HEK293 (cell line): ENCODE measurements at regions of chr1 and their contacts with region 1.

Region 1: GRCh38 chr1:151459331-151460046 is at the start of gene POGZ:
- H3K4me3 ChIP-seq: peak within 1 kb of the TSS; percentile 84
- H3K27ac ChIP-seq: peak within 1 kb of the TSS; percentile 77
- H3K4me1 ChIP-seq: 0 out of 2 replicates have a peak, but pooled peaks cover 2% of the 10 kb centered on the region
- CTCF ChIP-seq: no peak

Region 2: DNA sequence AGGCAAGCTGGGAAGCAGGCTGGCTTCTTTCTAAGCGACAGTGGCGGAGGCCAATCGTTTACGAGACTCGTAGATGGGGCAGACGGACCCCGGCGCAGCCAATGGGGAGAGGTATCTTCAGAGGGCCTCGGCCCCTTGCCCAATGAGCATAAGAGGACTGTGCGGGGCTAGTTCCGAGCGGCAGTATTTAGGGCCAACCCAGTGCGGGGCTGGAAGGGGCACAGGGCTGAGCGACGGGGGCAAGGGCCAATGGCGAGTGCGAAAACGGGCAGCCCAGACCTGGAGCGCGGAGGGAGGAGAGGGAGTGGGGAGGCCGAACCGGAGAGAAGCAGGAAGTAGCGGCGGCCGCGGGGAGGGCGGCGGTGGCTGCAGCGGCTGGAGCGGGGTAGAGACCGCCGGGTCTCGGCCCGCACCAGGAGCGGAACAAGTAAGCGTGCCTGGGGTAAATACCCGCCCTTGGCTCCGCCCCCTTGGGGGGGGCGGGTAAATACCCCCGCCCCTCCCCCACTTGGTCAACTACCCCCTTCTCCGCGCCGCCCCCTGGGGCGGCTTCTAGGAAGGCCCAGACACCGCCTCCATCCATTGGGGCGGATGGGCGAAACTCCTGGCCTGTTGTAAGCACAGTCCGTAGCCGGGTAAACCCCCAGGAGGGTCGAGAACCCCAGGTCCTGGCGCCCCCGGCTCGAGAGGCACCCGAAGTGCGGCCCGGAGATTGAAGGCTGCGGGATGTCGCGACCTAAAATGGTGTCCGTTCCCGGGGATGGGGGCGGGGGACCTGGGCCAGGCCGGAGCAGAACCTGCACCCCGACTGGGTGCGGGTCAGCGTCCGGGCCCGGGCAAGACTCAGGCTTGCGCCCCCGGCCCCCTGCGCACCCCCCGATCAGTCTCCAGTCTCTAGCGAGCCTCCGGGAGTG is 177.3 kb before region 1 on chr1 and contains the start of gene ZNF687:
- CTCF ChIA-PET with region 1: no interaction called
- POLR2A ChIA-PET with region 1: no interaction called
- H3K4me3 ChIP-seq: peak within 1 kb of the TSS; percentile 77
- H3K27ac ChIP-seq: peak within 1 kb of the TSS; percentile 90
- H3K4me1 ChIP-seq: no peaks in the 10 kb centered on the region
- CTCF ChIP-seq: no peak

Region 3: GRCh38 chr1:151494741-151495281 is 35.3 kb after region 1 on chr1:
- CTCF ChIA-PET with region 1: interaction called, 6 read pairs
- POLR2A ChIA-PET with region 1: interaction called, 11 read pairs
- H3K4me3 ChIP-seq: no peak overlapping the region
- H3K27ac ChIP-seq: no peak overlapping the region
- H3K4me1 ChIP-seq: peaks cover 9% of the 10 kb centered on the region; the same call in 1 of the 2 replicates
- CTCF ChIP-seq: no peak

Region 4: DNA sequence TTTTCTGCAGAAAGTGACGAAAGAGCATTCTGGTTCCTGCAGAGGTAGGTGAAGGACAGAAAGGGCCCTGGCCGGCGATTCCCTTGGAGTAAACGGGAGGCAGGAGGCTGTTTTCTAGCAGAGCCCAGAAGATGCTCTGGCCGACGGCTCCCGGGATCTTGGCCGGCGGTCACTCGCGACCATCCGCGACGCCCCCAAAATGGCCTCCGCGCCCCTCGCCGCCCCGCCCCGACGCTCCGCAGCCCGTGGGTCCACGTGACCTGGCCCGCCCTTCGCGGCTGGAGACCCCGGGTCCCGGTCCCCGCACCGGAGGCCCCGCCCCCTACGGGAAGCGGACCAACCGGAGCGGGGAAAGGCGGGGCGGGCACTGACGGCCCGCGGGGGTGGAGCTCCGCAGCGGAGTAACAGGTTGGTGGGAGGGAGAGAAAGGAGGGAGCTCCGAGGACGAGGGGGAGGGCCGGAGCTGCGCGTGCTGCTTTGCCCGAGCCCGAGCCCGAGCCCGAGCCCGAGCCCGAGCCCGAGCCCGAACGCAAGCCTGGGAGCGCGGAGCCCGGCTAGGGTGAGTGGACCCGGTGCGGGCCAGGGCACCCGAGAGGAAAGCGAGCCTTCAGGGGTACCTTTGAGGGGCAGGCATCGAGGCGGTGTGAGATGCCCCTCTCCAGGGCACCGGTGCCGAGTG is 51.6 kb after region 1 on chr1 and contains the start of gene CGN:
- CTCF ChIA-PET with region 1: interaction called, 4 read pairs
- POLR2A ChIA-PET with region 1: interaction called, 12 read pairs
- H3K4me3 ChIP-seq: peak within 1 kb of the TSS; percentile 64
- H3K27ac ChIP-seq: peak within 1 kb of the TSS; percentile 75; the same call in 1 of the 2 replicates
- H3K4me1 ChIP-seq: peaks cover 16% of the 10 kb centered on the region
- CTCF ChIP-seq: no peak